ENCODE measurements at regions of chr5 and their contacts with region 1.

Region 1: DNA sequence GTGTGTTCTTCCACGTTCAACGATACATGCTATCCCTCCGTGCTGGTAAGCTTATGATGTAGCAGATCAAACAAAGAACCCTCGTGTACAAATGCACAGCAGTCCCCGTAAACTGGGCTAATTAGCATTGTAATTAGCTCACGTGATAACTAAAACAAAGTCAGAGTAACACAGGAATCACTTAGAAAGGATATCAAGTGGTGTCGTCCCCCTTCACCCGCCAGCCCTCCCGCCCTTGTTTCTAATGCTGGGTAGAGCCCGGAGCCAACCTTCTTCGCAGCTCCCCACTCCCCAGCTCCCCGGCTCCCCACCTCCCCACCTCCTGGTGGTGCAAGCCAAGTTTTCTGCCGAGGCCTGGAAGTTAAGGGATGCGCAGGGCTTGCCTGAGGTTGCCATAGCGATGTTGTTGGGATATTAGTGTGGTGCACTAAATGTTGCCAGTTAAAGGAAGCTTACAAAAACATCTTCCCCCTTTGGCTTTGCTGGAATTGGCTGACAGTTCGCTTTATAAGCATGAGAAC is 357.9 kb upstream of the CCNH start:
- DNase-seq: no peak
- H3K4me3 ChIP-seq: no peak overlapping the region
- H3K27ac ChIP-seq: no peak overlapping the region
- H3K4me1 ChIP-seq: 0 out of 2 replicates have a peak, but pooled peaks cover 4% of the 10 kb centered on the region
- H3K27me3 ChIP-seq: no peaks in the 10 kb centered on the region
- CTCF ChIP-seq: no peak

Region 2: DNA sequence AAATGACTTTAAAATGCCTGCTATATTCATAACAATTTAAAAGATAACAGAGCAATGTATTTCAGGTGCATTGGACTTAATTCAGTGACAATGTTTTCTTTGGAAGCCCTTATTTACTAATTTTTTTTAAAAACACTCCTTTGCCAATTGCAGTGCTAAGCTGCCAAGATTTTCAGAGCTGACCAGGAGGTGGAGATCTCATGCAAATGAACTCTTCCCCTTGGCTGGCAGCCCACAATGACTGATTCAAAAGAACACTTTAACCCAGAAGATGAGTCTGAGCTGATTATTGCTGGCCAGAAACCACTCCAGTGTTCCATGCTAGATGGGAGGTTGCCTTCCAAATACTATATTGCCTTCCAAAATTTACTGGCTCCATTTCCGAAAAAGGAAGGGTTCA is 229.6 kb before region 1 on chr5:
- CTCF ChIA-PET with region 1: no interaction called
- POLR2A ChIA-PET with region 1: no interaction called
- intact Hi-C with region 1: loop called (anchors 10 kb)
- DNase-seq: peak in 1 of 2 experiments; percentile 32
- H3K4me3 ChIP-seq: no peak overlapping the region
- H3K27ac ChIP-seq: no peak overlapping the region
- H3K4me1 ChIP-seq: no peaks in the 10 kb centered on the region
- H3K27me3 ChIP-seq: no peaks in the 10 kb centered on the region
- CTCF ChIP-seq: no peak

Region 3: DNA sequence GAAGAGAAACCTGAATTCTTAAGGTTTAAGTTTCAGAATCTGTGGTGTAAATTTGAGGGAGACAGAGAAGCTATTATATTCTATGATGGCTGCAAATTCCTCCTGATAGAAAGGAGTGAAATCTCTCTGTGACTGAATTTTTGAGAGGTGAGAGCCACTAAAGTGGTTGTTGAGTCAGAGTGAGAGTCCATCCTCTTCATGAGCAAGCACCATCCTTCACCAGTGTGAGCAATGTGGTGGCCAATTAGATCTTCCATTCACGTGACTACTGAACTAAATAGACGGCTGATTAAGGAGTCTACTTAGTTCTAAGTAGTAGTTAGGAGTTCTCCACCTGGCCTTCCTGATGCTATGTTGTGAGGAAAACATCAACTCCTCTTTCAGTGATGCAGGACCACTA is 210.1 kb before region 1 on chr5:
- CTCF ChIA-PET with region 1: no interaction called
- POLR2A ChIA-PET with region 1: no interaction called
- intact Hi-C with region 1: no loop called
- DNase-seq: no peak
- H3K4me3 ChIP-seq: no peak overlapping the region
- H3K27ac ChIP-seq: no peak overlapping the region
- H3K4me1 ChIP-seq: no peaks in the 10 kb centered on the region
- H3K27me3 ChIP-seq: no peaks in the 10 kb centered on the region
- CTCF ChIP-seq: no peak